Right cardiac atrium (tissue), 5 donors: ENCODE measurements at regions of chr15 and their contacts with region 1.

Region 1: GRCh38 chr15:23877502-23878412 is 190.7 kb upstream of the NDN start:
- DNase-seq: peak; percentile 31 to 65 (median 56)
- ATAC-seq: peak; percentile 64 to 71
- H3K4me3 ChIP-seq: no peak overlapping the region
- H3K27ac ChIP-seq: no peak overlapping the region
- H3K4me1 ChIP-seq: no peaks in the 10 kb centered on the region
- H3K27me3 ChIP-seq: no peaks in the 10 kb centered on the region

Region 2: DNA sequence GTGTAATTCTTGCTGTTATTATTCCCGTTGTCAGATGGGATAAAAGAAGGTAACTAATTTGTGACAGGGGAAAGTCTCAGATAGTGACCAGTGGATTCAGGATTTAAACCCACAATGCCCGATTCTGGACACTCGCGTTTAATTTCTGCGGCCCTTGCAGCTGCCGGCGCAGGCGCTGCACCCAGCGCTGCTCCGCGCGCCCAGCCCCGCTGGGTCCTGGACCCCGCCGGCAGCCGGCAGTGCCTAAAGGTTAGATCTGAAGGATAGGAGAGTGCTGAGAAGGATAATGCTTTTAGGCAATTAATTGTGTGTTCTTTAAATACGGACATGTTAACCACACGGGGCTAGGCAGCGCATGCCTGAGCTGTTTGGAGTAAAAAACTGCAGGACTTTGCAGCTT is 315.8 kb before region 1 on chr15:
- intact Hi-C with region 1: no loop called
- DNase-seq: no peak
- ATAC-seq: no peak
- H3K4me3 ChIP-seq: no peak overlapping the region
- H3K27ac ChIP-seq: no peak overlapping the region
- H3K4me1 ChIP-seq: no peaks in the 10 kb centered on the region
- H3K27me3 ChIP-seq: peaks cover 2% of the 10 kb centered on the region

Region 3: GRCh38 chr15:23642413-23643044 is 235.2 kb before region 1 on chr15:
- intact Hi-C with region 1: loop called in 3 of 4 experiments (anchors 5 to 10 kb)
- DNase-seq: peak; percentile 45 to 76 (median 65)
- ATAC-seq: peak; percentile 78 to 80
- H3K4me3 ChIP-seq: no peak overlapping the region
- H3K27ac ChIP-seq: no peak overlapping the region
- H3K4me1 ChIP-seq: no peaks in the 10 kb centered on the region
- H3K27me3 ChIP-seq: no peaks in the 10 kb centered on the region

Region 4: GRCh38 chr15:23648920-23649515 is 228.7 kb before region 1 on chr15:
- intact Hi-C with region 1: loop called in 3 of 4 experiments (anchors 5 to 10 kb)
- DNase-seq: peak in 2 of 3 donors; percentile 61 to 62
- ATAC-seq: peak in 1 of 2 donors; percentile 47
- H3K4me3 ChIP-seq: no peak overlapping the region
- H3K27ac ChIP-seq: no peak overlapping the region
- H3K4me1 ChIP-seq: no peaks in the 10 kb centered on the region
- H3K27me3 ChIP-seq: no peaks in the 10 kb centered on the region

Region 5: GRCh38 chr15:23823508-23823907 is 54.2 kb before region 1 on chr15:
- intact Hi-C with region 1: loop called in 1 of 4 experiments (anchors 10 kb)
- DNase-seq: no peak
- ATAC-seq: no peak
- H3K4me3 ChIP-seq: no peak overlapping the region
- H3K27ac ChIP-seq: no peak overlapping the region
- H3K4me1 ChIP-seq: no peaks in the 10 kb centered on the region
- H3K27me3 ChIP-seq: no peaks in the 10 kb centered on the region

Region 6: DNA sequence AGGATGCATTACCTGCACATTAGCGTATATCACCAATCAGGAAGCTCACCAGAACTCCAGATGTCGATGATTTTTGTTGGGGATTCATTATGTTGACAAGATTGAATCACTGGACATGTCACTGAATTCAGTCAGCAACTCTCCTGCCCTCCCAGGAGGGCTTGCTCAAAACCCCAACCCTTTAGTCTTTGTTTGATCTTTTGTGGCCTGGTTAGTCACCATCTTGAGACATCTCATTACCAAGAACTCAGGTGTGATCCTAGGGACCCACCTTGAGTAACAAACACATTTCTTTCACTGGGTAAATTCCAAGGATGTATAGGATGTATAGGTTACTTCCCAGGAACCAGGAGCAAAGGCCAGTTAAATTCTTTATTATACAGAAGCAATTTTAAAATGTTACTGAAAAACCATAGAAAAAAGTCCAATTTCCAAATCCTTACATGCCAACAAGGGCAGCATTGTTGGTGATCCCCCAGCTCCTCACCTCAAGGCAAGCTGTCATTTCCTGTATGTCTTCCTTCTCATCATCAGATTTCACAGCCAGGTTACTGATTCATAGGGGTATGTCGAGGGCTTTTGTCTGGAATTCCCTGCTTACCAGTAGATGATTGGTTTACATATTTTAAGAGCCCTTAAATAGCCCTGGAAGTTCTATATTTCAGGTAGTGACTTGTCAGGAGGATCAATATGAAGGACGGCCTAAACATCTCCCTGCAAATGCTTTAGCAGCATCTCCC is 1088.8 kb after region 1 on chr15:
- intact Hi-C with region 1: no loop called
- DNase-seq: no peak
- ATAC-seq: no peak
- H3K4me3 ChIP-seq: no peak overlapping the region
- H3K27ac ChIP-seq: no peak overlapping the region
- H3K4me1 ChIP-seq: no peaks in the 10 kb centered on the region
- H3K27me3 ChIP-seq: no peaks in the 10 kb centered on the region